ENCODE measurements at regions of chr14 and their contacts with region 1.

Region 1: GRCh38 chr14:61694830-61695694 is at the start of gene HIF1A:
- DNase-seq: peak; percentile 99
- H3K4me3 ChIP-seq: peak within 1 kb of the TSS; percentile 91
- H3K27ac ChIP-seq: peak within 1 kb of the TSS; percentile 74
- H3K4me1 ChIP-seq: peaks cover 37% of the 10 kb centered on the region
- CTCF ChIP-seq: peak; percentile 40; the same call in 1 of the 2 replicates
- total RNA-seq, gene HIF1A: 59.5 and 71.7 TPM in 2 replicates

Region 2: GRCh38 chr14:61553725-61554641 is 141.1 kb before region 1 on chr14:
- CTCF ChIA-PET with region 1: interaction called, 3 read pairs
- POLR2A ChIA-PET with region 1: interaction called, 3 read pairs
- intact Hi-C with region 1: loop called (anchors 1 kb)
- DNase-seq: no peak
- H3K4me3 ChIP-seq: peak overlapping the region; percentile 6
- H3K27ac ChIP-seq: peak overlapping the region; percentile 83
- H3K4me1 ChIP-seq: peaks cover 54% of the 10 kb centered on the region
- CTCF ChIP-seq: no peak

Region 3: GRCh38 chr14:61644834-61645233 is 50.2 kb before region 1 on chr14:
- CTCF ChIA-PET with region 1: no interaction called
- POLR2A ChIA-PET with region 1: interaction called, 7 read pairs
- intact Hi-C with region 1: loop called (anchors 2 kb)
- DNase-seq: peak; percentile 90
- H3K4me3 ChIP-seq: peak overlapping the region; percentile 51
- H3K27ac ChIP-seq: peak overlapping the region; percentile 95
- H3K4me1 ChIP-seq: peaks cover 61% of the 10 kb centered on the region
- CTCF ChIP-seq: no peak

Region 4: DNA sequence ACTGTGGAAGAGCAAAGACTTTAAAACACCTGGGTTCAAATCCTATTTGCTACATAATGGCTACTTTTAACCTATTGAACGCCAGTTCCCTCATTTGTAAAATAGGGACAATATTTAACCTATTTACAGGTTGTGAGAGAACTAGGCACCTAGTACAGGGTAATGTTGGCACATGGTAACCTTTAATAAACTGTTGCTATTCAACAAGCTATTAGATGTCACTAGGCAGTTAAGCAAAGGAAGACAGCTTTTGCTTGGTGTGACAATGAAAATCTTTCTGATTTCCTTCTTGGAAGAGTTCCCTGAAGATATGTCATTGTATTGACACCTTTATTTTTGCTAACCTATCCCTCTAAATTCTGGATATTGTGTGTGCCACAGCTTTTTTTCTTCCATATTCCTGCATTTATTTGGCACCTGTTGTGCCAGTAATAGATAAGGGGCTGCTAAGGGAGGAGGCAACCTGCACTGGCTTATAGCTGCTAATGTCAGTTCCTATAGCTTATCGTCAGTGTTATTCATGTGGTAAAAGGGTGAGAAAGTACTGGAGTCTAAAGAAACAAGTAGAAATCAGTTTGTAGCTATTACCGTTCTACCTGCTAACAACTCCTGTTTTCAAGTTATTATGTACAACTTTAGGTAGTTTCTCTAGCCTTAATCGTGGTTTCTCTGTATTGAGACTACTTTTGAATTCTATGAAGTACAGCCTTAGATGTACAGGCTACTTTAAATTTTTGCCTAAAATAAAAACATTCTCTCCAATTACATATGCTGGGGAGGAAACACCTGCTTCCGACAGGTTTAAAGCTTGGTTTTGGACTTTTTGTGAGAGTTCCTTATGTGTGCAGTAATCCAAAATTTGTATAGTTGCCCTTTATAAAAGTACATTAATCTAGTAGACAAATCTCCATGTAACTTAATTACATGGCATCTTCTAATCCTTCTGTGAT is 24.6 kb after region 1 on chr14:
- CTCF ChIA-PET with region 1: no interaction called
- POLR2A ChIA-PET with region 1: interaction called, 79 read pairs
- intact Hi-C with region 1: loop called (anchors 1 kb)
- DNase-seq: peak; percentile 63
- H3K4me3 ChIP-seq: peak overlapping the region; percentile 62
- H3K27ac ChIP-seq: peak overlapping the region; percentile 88
- H3K4me1 ChIP-seq: peaks cover 68% of the 10 kb centered on the region
- CTCF ChIP-seq: no peak

Region 5: GRCh38 chr14:62081012-62081612 is 386.1 kb after region 1 on chr14:
- CTCF ChIA-PET with region 1: no interaction called
- POLR2A ChIA-PET with region 1: no interaction called
- intact Hi-C with region 1: loop called (anchors 5 kb)
- DNase-seq: peak; percentile 90
- H3K4me3 ChIP-seq: peak overlapping the region; percentile 53
- H3K27ac ChIP-seq: peak overlapping the region; percentile 88
- H3K4me1 ChIP-seq: peaks cover 69% of the 10 kb centered on the region
- CTCF ChIP-seq: no peak